CD4-positive, alpha-beta memory T cell (primary cell): ENCODE measurements at regions of chr3 and their contacts with region 1.

Region 1: DNA sequence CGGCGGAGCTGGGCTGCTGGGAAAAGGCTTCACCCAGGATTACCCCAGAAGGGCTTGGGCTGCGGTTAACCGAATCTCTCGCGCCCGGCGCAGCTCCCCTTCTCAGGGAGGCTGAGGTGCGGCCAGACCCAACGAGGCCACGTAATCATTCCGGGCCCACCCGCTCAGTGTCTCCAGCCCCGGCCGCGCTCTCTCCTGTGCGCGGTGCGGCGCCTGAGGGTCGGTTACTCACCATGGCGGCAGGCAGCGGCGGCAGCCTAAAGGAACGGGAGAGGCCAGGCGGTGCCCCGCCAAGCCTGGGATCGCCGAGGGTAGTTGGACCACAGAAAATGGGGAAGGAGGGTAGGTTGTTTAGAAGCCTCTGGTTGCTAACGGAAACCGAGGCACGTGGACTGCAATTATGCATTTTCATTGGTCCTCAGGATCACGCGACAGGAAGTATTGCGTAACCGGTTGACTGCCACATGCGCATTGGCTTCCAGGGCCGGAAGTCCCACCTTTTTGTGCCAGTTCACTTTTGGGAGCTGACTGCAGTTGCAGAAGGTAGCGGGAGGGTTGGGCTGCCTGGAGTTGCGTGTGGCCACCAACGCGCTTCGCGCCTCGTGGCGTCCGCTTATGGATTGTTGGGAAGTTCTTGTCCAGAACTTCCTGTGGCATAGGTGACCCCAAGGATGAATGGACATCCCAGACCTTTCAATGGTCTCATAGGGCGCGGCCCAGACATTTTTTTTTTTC is at the start of gene LZTFL1:
- DNase-seq: peak; percentile 88 to 93 (median 91)
- H3K4me3 ChIP-seq: peak within 1 kb of the TSS; percentile 58 to 98
- H3K4me3 Mint-ChIP-seq: peak within 1 kb of the TSS; percentile 94 to 99 (median 95)
- H3K27ac ChIP-seq: peak within 1 kb of the TSS; percentile 70
- H3K27ac Mint-ChIP-seq: peak within 1 kb of the TSS; percentile 95 to 98 (median 97)
- H3K4me1 ChIP-seq: peaks cover 19% of the 10 kb centered on the region
- H3K4me1 Mint-ChIP-seq: peaks cover 11 to 30% (median 17%) of the 10 kb centered on the region in 4 donors
- H3K27me3 ChIP-seq: no peaks in the 10 kb centered on the region
- H3K27me3 Mint-ChIP-seq: no peaks in the 10 kb centered on the region
- total RNA-seq, gene LZTFL1: 7.1 to 10.0 TPM

Region 2: GRCh38 chr3:45628746-45629145 is 213.2 kb before region 1 on chr3:
- CTCF ChIA-PET with region 1: no interaction called
- POLR2A ChIA-PET with region 1: no interaction called
- intact Hi-C with region 1: no loop called
- DNase-seq: no peak
- H3K4me3 ChIP-seq: no peak overlapping the region
- H3K4me3 Mint-ChIP-seq: no peak overlapping the region
- H3K27ac ChIP-seq: no peak overlapping the region
- H3K27ac Mint-ChIP-seq: peak overlapping the region in 5 of 7 donors; percentile 5 to 66 (median 31)
- H3K4me1 ChIP-seq: peaks cover 6% of the 10 kb centered on the region
- H3K4me1 Mint-ChIP-seq: peaks cover 13 to 41% (median 21%) of the 10 kb centered on the region in 4 donors
- H3K27me3 ChIP-seq: no peaks in the 10 kb centered on the region
- H3K27me3 Mint-ChIP-seq: no peaks in the 10 kb centered on the region

Region 3: GRCh38 chr3:45852828-45853227 is 10.9 kb after region 1 on chr3:
- CTCF ChIA-PET with region 1: no interaction called
- POLR2A ChIA-PET with region 1: interaction called, 14 read pairs
- intact Hi-C with region 1: no loop called
- DNase-seq: no peak
- H3K4me3 ChIP-seq: no peak overlapping the region
- H3K4me3 Mint-ChIP-seq: no peak overlapping the region
- H3K27ac ChIP-seq: no peak overlapping the region
- H3K27ac Mint-ChIP-seq: peak overlapping the region in 1 of 7 donors; percentile 37
- H3K4me1 ChIP-seq: no peaks in the 10 kb centered on the region
- H3K4me1 Mint-ChIP-seq: peaks cover 10 to 23% (median 16%) of the 10 kb centered on the region in 4 donors
- H3K27me3 ChIP-seq: no peaks in the 10 kb centered on the region
- H3K27me3 Mint-ChIP-seq: peaks cover 14 to 16% of the 10 kb centered on the region in 2 donors

Region 4: GRCh38 chr3:45870099-45870498 is 28.2 kb after region 1 on chr3:
- CTCF ChIA-PET with region 1: interaction called, 4 read pairs
- POLR2A ChIA-PET with region 1: interaction called, 15 read pairs
- intact Hi-C with region 1: loop called (anchors 1 kb)
- DNase-seq: peak; percentile 86 to 93 (median 91)
- H3K4me3 ChIP-seq: no peak overlapping the region
- H3K4me3 Mint-ChIP-seq: peak overlapping the region; percentile 4 to 73 (median 56)
- H3K27ac ChIP-seq: no peak overlapping the region
- H3K27ac Mint-ChIP-seq: peak overlapping the region; percentile 14 to 86 (median 72)
- H3K4me1 ChIP-seq: peaks cover 44% of the 10 kb centered on the region
- H3K4me1 Mint-ChIP-seq: peaks cover 33 to 59% (median 42%) of the 10 kb centered on the region in 4 donors
- H3K27me3 ChIP-seq: no peaks in the 10 kb centered on the region
- H3K27me3 Mint-ChIP-seq: peaks cover 10 to 12% of the 10 kb centered on the region in 2 donors

Region 5: DNA sequence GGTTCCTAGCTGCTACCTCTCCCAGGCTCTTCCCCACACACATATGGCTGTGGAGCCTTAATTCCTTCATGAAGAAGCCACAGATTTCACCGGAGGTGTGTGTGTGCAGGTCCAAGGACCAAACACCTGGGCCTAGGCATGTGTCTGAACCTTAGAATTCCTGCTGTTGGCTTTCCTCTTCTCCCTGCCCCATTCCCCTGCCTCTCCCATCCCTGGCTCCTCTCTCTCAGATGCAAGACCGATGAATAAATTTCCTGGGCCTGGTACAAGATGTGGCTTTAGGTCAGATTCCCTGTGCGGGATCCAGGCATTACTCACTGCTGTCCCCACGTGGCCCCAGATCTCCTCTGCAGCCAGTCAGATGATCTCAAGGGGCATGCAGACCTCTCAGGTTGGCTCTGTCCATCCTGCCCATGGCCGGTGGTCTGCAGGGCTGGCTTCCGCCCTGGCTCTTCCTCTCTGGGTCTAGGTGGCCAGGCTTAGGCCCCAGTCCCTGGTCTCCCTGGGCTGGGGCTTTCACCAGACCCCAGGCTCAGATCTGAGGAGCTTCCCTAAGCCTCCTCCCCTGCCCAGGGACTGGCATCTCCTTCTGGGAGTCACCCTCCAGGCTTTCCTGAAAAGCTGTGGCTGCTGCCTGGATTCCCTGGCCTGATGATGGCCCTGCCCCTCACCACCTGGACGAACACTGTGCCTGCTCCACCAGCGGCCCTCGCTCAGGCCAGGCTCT is 64.9 kb after region 1 on chr3:
- CTCF ChIA-PET with region 1: interaction called, 6 read pairs
- POLR2A ChIA-PET with region 1: interaction called, 19 read pairs
- intact Hi-C with region 1: no loop called
- DNase-seq: no peak
- H3K4me3 ChIP-seq: no peak overlapping the region
- H3K4me3 Mint-ChIP-seq: peak overlapping the region in 1 of 8 donors; percentile 62
- H3K27ac ChIP-seq: no peak overlapping the region
- H3K27ac Mint-ChIP-seq: peak overlapping the region in 3 of 7 donors; percentile 30 to 51 (median 35)
- H3K4me1 ChIP-seq: peaks cover 34% of the 10 kb centered on the region
- H3K4me1 Mint-ChIP-seq: peaks cover 22 to 55% (median 35%) of the 10 kb centered on the region in 4 donors
- H3K27me3 ChIP-seq: no peaks in the 10 kb centered on the region
- H3K27me3 Mint-ChIP-seq: no peaks in the 10 kb centered on the region

Region 6: GRCh38 chr3:45929042-45929679 is 87.2 kb after region 1 on chr3:
- CTCF ChIA-PET with region 1: interaction called, 24 read pairs
- POLR2A ChIA-PET with region 1: interaction called, 13 read pairs
- intact Hi-C with region 1: no loop called
- DNase-seq: peak; percentile 55 to 64 (median 56)
- H3K4me3 ChIP-seq: no peak overlapping the region
- H3K4me3 Mint-ChIP-seq: no peak overlapping the region
- H3K27ac ChIP-seq: no peak overlapping the region
- H3K27ac Mint-ChIP-seq: peak overlapping the region in 3 of 7 donors; percentile 22 to 68 (median 53)
- H3K4me1 ChIP-seq: no peaks in the 10 kb centered on the region
- H3K4me1 Mint-ChIP-seq: peaks cover 5 to 23% (median 9%) of the 10 kb centered on the region in 4 donors
- H3K27me3 ChIP-seq: no peaks in the 10 kb centered on the region
- H3K27me3 Mint-ChIP-seq: no peaks in the 10 kb centered on the region